SK-N-SH (cell line): ENCODE measurements at regions of chr1 and their contacts with region 1.

Region 1: DNA sequence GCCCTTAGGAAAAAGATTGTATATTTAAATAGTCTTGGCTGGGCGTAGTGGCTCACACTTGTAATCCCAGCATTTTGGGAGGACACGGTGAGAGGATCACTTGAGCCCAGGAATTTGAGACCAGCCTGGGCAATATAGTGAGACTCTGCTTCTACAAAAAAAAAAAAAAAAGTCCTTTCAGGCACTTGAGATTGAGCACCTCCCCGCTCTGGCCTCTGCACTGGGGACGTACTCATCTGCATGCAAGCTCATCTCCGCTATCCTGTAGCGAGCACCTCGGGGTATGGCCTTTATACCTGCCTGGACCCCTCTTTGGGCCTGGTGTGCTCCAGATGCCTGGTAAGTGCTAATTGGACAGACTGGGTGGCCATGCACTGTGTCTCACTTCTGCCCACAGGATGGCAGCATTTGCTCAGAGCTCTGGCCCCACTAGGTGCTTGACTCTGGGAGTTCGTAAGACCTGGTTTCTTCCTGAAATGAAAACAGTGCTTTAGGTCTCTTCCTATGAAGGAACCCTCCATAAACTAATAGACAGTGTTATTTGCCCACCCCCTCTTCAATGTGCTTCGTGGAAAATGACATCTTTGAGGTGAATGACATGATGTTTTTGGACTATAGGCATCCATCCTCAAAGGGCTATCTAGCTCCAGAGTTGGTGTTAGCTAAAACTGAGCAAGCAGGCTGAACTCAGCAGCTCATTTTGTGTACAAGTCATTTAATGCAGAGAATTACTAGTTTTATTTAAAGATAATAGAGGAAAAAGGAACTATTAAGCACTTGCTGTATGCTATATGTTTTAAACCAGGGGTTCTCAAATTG is 61.7 kb upstream of the ADAR start:
- DNase-seq: peak; percentile 89
- H3K4me3 ChIP-seq: no peak overlapping the region
- H3K27ac ChIP-seq: no peak overlapping the region
- H3K4me1 ChIP-seq: no peaks in the 10 kb centered on the region
- H3K27me3 ChIP-seq: no peaks in the 10 kb centered on the region; the same call in 1 of the 2 replicates
- CTCF ChIP-seq: peak; percentile 80
- EP300 ChIP-seq: no peak
- RAD21 ChIP-seq: peak; percentile 98

Region 2: GRCh38 chr1:154657556-154657955 is 12.1 kb before region 1 on chr1:
- CTCF ChIA-PET with region 1: interaction called, 11 read pairs
- POLR2A ChIA-PET with region 1: no interaction called
- DNase-seq: no peak
- H3K4me3 ChIP-seq: no peak overlapping the region
- H3K27ac ChIP-seq: no peak overlapping the region
- H3K4me1 ChIP-seq: no peaks in the 10 kb centered on the region; a peak in 1 of 4 replicates
- H3K27me3 ChIP-seq: peaks cover 17% of the 10 kb centered on the region; the same call in 1 of the 2 replicates
- CTCF ChIP-seq: no peak
- EP300 ChIP-seq: no peak
- RAD21 ChIP-seq: no peak

Region 3: GRCh38 chr1:154747740-154748404 is 78.2 kb after region 1 on chr1:
- CTCF ChIA-PET with region 1: interaction called, 17 read pairs
- POLR2A ChIA-PET with region 1: no interaction called
- DNase-seq: peak; percentile 78
- H3K4me3 ChIP-seq: no peak overlapping the region
- H3K27ac ChIP-seq: peak overlapping the region in 1 of 2 experiments; percentile 85; a peak in 2 of 4 replicates
- H3K4me1 ChIP-seq: peaks cover 0 to 53% of the 10 kb centered on the region in 2 experiments; a peak in 2 of 4 replicates
- H3K27me3 ChIP-seq: peaks cover 56% of the 10 kb centered on the region
- CTCF ChIP-seq: no peak
- EP300 ChIP-seq: peak in 1 of 2 experiments; percentile 31; a peak in 1 of 4 replicates
- RAD21 ChIP-seq: no peak

Region 4: DNA sequence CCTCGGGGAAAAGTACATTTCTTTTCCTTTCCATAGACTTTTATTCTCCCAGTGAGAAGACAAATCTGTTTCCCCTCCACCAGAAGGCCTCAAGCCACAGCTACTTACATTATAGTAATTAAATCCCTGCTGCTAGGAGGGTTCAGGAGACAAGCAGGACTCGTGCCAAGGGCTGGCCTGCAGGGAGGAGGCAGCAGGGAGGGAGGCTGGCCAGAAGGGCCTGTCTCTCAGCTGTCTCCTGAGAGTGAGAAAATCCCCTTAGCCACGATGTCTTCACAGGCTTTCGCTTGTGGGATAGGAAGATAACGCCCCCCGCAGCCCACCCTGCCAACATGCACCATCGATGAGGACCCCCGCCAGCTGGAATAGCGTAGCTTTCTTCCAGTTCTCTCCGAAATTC is 186.4 kb after region 1 on chr1:
- CTCF ChIA-PET with region 1: interaction called, 11 read pairs
- POLR2A ChIA-PET with region 1: no interaction called
- DNase-seq: peak; percentile 56
- H3K4me3 ChIP-seq: no peak overlapping the region
- H3K27ac ChIP-seq: no peak overlapping the region; a peak in 1 of 4 replicates
- H3K4me1 ChIP-seq: peaks cover 0 to 23% of the 10 kb centered on the region in 2 experiments; a peak in 1 of 4 replicates
- H3K27me3 ChIP-seq: no peaks in the 10 kb centered on the region
- CTCF ChIP-seq: no peak
- EP300 ChIP-seq: peak in 1 of 2 experiments; percentile 21; a peak in 1 of 4 replicates
- RAD21 ChIP-seq: peak; percentile 37; the same call in 1 of the 2 replicates

Region 5: GRCh38 chr1:154870115-154870571 is 200.5 kb after region 1 on chr1 and contains the start of gene KCNN3:
- CTCF ChIA-PET with region 1: interaction called, 32 read pairs
- POLR2A ChIA-PET with region 1: interaction called, 3 read pairs
- DNase-seq: peak; percentile 96
- H3K4me3 ChIP-seq: peak within 1 kb of the TSS; percentile 37 to 59
- H3K27ac ChIP-seq: no peak within 1 kb of the TSS; a peak in 1 of 4 replicates
- H3K4me1 ChIP-seq: peaks cover 14 to 40% of the 10 kb centered on the region in 2 experiments
- H3K27me3 ChIP-seq: peaks cover 8% of the 10 kb centered on the region; the same call in 1 of the 2 replicates
- CTCF ChIP-seq: no peak
- EP300 ChIP-seq: no peak
- RAD21 ChIP-seq: no peak; the same call in 1 of the 2 replicates
- polyA plus RNA-seq, gene KCNN3: 0.10 and 0.16 TPM in 2 replicates

Region 6: DNA sequence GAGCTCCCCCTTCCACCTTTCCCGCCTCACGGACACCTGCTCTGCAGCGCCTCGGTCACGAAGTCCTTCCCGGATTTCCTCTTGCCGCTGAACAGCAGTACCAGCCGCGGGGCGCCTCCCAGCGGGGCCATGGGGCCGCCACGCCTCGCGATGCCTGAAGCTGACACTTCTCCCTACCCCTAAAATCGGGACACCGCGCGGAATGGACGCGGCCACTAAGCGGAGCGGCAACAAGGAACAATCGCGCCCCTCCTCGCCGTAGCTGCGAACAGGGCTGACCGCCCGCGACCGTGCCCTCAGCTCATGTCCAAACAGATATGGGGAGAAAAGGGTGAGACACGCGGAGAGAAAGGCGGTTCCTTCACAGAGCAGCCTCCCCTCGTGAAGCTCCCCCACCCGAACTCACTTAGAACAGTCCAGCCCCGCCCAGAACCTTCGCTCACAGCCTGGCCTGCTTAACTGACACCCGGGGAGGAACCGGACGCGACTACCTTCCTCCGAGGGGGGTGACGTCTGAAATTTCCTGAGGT is 266.9 kb after region 1 on chr1 and contains the start of gene PMVK:
- CTCF ChIA-PET with region 1: interaction called, 34 read pairs
- POLR2A ChIA-PET with region 1: interaction called, 3 read pairs
- DNase-seq: peak; percentile 97
- H3K4me3 ChIP-seq: peak within 1 kb of the TSS; percentile 63 to 77
- H3K27ac ChIP-seq: peak within 1 kb of the TSS; percentile 94 to 95
- H3K4me1 ChIP-seq: peaks cover 20 to 28% of the 10 kb centered on the region in 2 experiments; a peak in 3 of 4 replicates
- H3K27me3 ChIP-seq: no peaks in the 10 kb centered on the region
- CTCF ChIP-seq: peak; percentile 46
- EP300 ChIP-seq: peak in 1 of 2 experiments; percentile 55; a peak in 1 of 4 replicates
- RAD21 ChIP-seq: no peak
- polyA plus RNA-seq, gene PMVK: 50.7 and 59.6 TPM in 2 replicates